Tibial artery (tissue), 4 donors: ENCODE measurements at regions of chr2 and their contacts with region 1.

Region 1: GRCh38 chr2:219177552-219178376 is at the start of gene RETREG2:
- DNase-seq: peak; percentile 94
- H3K4me3 ChIP-seq: peak within 1 kb of the TSS; percentile 87 to 90
- H3K27ac ChIP-seq: peak within 1 kb of the TSS; percentile 98
- H3K4me1 ChIP-seq: peaks cover 4 to 36% (median 33%) of the 10 kb centered on the region in 4 donors
- H3K27me3 ChIP-seq: no peaks in the 10 kb centered on the region
- CTCF ChIP-seq: peak; percentile 22 to 53

Region 2: GRCh38 chr2:219218732-219219701 is 41.3 kb after region 1 on chr2 and contains the start of gene ABCB6:
- intact Hi-C with region 1: loop called (anchors 5 kb)
- DNase-seq: peak; percentile 99
- H3K4me3 ChIP-seq: peak within 1 kb of the TSS; percentile 55 to 60
- H3K27ac ChIP-seq: peak within 1 kb of the TSS; percentile 88 to 89
- H3K4me1 ChIP-seq: peaks cover 5 to 41% (median 31%) of the 10 kb centered on the region in 4 donors
- H3K27me3 ChIP-seq: no peaks in the 10 kb centered on the region
- CTCF ChIP-seq: no peak

Region 3: DNA sequence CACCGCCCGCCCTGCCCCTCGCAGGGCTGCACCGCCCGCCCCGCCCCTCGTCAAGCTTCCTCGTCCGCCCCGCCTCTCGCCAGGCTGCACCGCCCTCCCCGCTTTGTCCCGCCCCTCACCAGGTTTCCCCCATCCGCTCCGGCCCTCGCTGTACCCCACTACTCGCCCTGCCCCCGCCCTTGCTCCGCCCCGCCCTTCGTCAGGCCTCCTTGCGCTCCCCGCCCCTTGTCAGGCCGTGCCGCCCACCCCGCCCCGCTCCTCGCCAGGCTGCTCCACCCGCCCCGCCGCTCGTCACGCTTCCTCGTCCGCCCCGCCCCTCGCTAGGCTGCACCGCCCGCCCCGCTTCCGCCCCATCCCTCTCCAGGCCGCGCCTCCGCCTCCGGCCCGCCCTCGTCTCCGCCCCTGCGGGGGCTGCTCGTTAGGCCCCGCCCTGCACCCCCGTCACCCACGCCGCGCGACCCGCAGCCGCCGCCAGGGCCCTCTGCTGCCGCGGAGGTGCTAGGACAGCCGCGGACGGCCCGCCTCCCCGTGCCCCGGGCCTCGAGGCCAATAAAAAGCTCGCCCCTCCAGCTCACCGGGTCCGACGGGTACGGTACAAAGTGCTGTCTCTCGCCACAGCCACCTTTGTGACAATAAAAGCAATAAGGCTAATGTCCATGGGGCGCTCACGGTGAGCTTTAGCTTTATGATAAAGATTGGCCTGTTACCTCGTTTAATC is 210.5 kb after region 1 on chr2:
- intact Hi-C with region 1: loop called (anchors 10 kb)
- DNase-seq: peak; percentile 97 to 99
- H3K4me3 ChIP-seq: peak overlapping the region; percentile 67 to 94
- H3K27ac ChIP-seq: peak overlapping the region; percentile 91 to 97
- H3K4me1 ChIP-seq: peaks cover 0 to 14% (median 11%) of the 10 kb centered on the region in 4 donors
- H3K27me3 ChIP-seq: no peaks in the 10 kb centered on the region
- CTCF ChIP-seq: peak; percentile 64 to 87